ENCODE measurements at regions of chr9 and their contacts with region 1.

Region 1: GRCh38 chr9:72871685-72872084 is 81.2 kb downstream of the ALDH1A1 start:
- DNase-seq: peak in 1 of 2 experiments; percentile 48
- ATAC-seq: peak in 1 of 2 experiments; percentile 43; a peak in 4 of 6 replicates
- H3K4me3 ChIP-seq: no peak overlapping the region
- H3K27ac ChIP-seq: peak overlapping the region; percentile 61 to 81
- H3K4me1 ChIP-seq: peaks cover 47% of the 10 kb centered on the region
- CTCF ChIP-seq: peak; percentile 88
- EP300 ChIP-seq: no peak
- POLR2A ChIP-seq: no peak
- RAD21 ChIP-seq: peak; percentile 77 to 91

Region 2: GRCh38 chr9:72856972-72857623 is 14.6 kb before region 1 on chr9:
- CTCF ChIA-PET with region 1: interaction called, 32 read pairs
- POLR2A ChIA-PET with region 1: no interaction called
- DNase-seq: peak; percentile 66 to 92
- ATAC-seq: peak; percentile 75
- H3K4me3 ChIP-seq: no peak overlapping the region
- H3K27ac ChIP-seq: peak overlapping the region; percentile 92 to 93
- H3K4me1 ChIP-seq: peaks cover 43% of the 10 kb centered on the region
- CTCF ChIP-seq: peak; percentile 82
- EP300 ChIP-seq: no peak
- POLR2A ChIP-seq: no peak
- RAD21 ChIP-seq: peak; percentile 80 to 82

Region 3: DNA sequence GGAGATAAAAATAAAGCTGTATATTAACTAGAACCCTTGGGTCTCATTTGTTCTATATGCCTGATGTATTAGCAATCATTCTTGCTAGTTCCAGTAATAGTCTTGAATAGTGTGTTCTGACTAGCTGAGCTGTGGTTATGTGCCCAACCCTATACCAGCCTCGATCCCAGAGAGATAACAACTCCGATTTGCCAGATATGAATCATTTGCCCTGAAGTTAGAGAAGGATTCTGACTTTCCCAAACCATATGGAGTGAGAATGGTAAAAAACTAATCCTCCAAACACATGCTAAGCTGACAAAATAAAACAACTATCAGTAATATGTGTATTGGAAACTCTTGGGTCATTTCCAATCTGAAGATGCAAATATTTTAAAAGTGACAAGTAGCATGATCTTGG is 16.4 kb after region 1 on chr9:
- CTCF ChIA-PET with region 1: interaction called, 22 read pairs
- POLR2A ChIA-PET with region 1: no interaction called
- DNase-seq: no peak
- ATAC-seq: no peak
- H3K4me3 ChIP-seq: no peak overlapping the region
- H3K27ac ChIP-seq: no peak overlapping the region
- H3K4me1 ChIP-seq: peaks cover 19% of the 10 kb centered on the region
- CTCF ChIP-seq: no peak
- EP300 ChIP-seq: no peak
- POLR2A ChIP-seq: no peak
- RAD21 ChIP-seq: no peak

Region 4: GRCh38 chr9:72898360-72898759 is 26.7 kb after region 1 on chr9:
- CTCF ChIA-PET with region 1: no interaction called
- POLR2A ChIA-PET with region 1: no interaction called
- DNase-seq: no peak
- ATAC-seq: no peak
- H3K4me3 ChIP-seq: no peak overlapping the region
- H3K27ac ChIP-seq: peak overlapping the region; percentile 9 to 12; a peak in 4 of 6 replicates
- H3K4me1 ChIP-seq: peaks cover 87% of the 10 kb centered on the region
- CTCF ChIP-seq: no peak
- EP300 ChIP-seq: no peak
- POLR2A ChIP-seq: no peak
- RAD21 ChIP-seq: no peak

Region 5: GRCh38 chr9:73093740-73094379 is 222.2 kb after region 1 on chr9:
- CTCF ChIA-PET with region 1: interaction called, 12 read pairs
- POLR2A ChIA-PET with region 1: interaction called, 4 read pairs
- DNase-seq: no peak
- ATAC-seq: peak in 1 of 2 experiments; percentile 20; a peak in 1 of 6 replicates
- H3K4me3 ChIP-seq: peak overlapping the region; percentile 38
- H3K27ac ChIP-seq: peak overlapping the region; percentile 83 to 88
- H3K4me1 ChIP-seq: peaks cover 54% of the 10 kb centered on the region
- CTCF ChIP-seq: no peak
- EP300 ChIP-seq: no peak
- POLR2A ChIP-seq: no peak
- RAD21 ChIP-seq: no peak

Region 6: DNA sequence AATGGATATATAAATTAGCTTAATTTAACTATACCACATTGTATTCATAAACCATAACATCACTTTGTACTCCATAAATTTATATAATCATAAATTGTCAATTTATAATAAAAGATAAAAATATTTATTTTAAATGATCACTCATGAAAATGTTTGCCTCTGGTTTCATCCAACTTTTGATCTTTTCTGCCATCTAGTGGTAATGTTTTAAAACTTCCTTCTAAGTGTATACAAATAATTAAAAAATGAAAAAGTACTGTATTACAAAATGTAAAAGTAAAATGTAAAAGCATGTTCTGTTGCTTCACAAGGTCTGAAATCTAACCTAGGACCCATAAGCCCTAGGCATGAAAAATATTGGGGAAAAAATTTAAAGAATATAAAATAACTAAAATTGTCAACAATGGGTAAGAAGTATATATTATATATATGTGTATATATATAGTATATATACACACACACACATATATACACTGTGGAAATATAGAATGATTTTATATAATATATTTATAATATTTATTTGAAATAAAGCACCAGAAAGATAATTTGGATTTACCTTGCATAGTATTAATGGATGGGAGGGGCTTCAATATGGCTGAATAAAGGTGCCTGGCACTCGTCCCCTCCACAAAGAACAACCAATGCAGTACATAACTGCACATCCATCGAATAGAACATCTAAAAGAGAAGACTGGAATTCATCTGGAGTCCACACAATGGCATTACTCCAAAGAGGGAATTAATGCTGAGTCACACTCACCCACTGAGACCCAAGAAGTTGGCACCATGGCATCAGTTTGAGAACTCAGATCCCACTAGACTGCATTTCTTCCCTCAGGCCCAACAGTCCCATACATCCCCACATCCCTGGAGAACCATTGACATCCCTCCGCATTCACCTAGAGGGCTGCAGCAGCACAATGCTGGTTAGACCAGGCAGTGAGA is 312.5 kb after region 1 on chr9:
- CTCF ChIA-PET with region 1: interaction called, 13 read pairs
- POLR2A ChIA-PET with region 1: no interaction called
- DNase-seq: peak in 1 of 2 experiments; percentile 65
- ATAC-seq: no peak
- H3K4me3 ChIP-seq: 0 out of 3 replicates have a peak overlapping the region, but pooled peaks have one; percentile 39
- H3K27ac ChIP-seq: peak overlapping the region; percentile 85 to 88
- H3K4me1 ChIP-seq: peaks cover 55% of the 10 kb centered on the region
- CTCF ChIP-seq: peak; percentile 66; the same call in 2 of the 3 replicates
- EP300 ChIP-seq: no peak
- POLR2A ChIP-seq: no peak
- RAD21 ChIP-seq: peak; percentile 80 to 89